Tibial artery (tissue), 4 donors: ENCODE measurements at regions of chrX and their contacts with region 1.

Region 1: DNA sequence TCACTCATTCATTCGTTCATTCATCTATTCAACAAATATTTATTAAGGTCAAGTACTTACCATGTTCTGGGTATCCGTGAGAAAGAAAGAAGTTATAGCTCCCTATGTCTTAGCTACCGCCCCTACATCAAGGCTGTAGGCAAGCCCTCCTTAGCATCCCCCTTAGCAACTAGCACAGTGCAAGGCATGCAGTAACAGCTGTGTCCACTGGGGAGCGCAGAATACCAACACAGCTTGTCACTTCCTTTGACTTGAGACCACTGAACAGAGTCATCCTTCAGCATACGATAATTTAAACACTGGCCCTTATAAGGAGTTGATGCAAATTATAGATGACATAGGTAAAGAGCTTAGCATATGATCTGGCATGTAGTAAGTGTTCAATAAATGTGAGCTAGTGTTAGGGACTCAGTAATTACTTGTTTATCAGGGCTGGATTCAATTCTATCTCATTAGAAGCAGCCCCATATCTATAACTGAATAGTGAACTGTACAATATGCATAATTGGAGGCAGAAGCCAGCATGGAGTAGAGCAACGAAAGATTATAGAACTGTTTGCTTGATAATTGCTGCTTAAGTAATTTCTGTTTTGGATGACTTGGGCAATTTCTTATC is 8.7 kb downstream of the KIAA1210 start:
- DNase-seq: peak; percentile 35 to 62
- H3K4me3 ChIP-seq: no peak overlapping the region
- H3K27ac ChIP-seq: no peak overlapping the region
- H3K4me1 ChIP-seq: no peaks in the 10 kb centered on the region
- H3K27me3 ChIP-seq: no peaks in the 10 kb centered on the region
- CTCF ChIP-seq: peak; percentile 55 to 58

Region 2: DNA sequence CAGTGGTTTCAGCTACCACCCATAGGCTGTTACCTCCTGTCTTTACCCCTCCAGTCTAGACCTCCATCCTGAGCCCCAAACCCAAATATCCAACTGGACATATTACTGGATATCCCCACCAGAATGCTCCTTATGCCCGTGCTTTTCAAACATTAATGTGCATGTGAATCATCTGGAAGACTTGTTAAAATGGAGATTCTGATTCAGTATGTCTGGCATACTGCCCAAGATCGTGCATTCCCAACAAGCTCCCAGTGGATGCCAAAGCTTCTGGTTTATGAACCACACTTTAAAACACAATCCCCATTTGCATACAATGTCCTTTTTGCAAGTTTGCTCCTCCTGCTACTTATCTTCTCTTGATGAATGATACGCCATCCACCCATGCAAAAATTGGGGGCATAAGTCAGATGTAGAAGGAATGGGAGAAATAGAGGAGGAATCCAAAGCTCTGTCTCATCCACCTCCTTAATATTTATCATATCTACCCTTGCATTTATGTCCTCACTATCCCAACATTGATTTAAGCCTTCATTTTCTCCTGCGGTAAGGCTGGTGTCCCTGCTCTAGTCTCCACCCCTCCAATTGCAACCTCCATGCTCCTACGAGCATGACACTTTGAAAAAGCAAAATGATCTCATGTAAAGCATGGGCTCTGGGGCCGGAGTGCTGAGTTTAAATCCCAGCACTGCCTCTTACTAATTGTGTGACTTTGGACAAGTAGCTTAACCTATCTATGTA is 109.8 kb after region 1 on chrX:
- intact Hi-C with region 1: loop called (anchors 10 kb)
- DNase-seq: no peak
- H3K4me3 ChIP-seq: no peak overlapping the region
- H3K27ac ChIP-seq: no peak overlapping the region
- H3K4me1 ChIP-seq: no peaks in the 10 kb centered on the region
- H3K27me3 ChIP-seq: no peaks in the 10 kb centered on the region
- CTCF ChIP-seq: no peak

Region 3: DNA sequence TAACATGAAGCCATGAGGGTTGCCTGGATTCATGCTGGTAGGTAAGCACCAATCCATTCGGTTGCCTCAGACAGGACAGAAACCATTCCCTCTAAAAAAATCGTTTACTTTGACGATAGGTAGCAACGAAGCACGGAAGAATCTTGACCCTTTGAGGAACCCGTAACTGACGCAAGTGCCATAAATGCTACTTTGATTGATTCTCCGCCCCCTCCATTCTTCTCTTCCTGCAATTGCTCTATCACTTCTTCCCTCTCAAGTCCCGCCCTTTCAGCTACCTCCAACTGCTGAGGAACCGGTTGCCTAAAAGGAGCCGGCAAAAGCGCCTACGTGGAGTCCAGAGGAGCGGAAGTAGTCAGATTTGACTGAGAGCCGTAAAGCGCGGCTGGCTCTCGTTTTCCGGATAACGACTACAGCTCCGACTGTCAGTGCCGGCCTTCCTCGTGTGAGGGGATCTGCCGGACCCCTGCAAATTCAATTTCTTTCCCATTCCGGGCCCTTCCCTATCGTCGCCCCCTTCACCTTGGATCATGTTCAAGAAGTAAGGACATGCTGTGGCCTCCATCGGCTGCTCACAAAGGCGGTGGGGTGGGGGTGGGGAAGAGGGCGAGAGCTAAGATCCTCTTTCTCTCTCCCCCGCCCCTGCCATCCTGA is 1484.9 kb after region 1 on chrX and contains the start of gene MCTS1:
- intact Hi-C with region 1: no loop called
- DNase-seq: peak; percentile 79 to 90
- H3K4me3 ChIP-seq: peak within 1 kb of the TSS; percentile 65
- H3K27ac ChIP-seq: peak within 1 kb of the TSS; percentile 82 to 89
- H3K4me1 ChIP-seq: peaks cover 0 to 10% (median 4%) of the 10 kb centered on the region in 4 donors
- H3K27me3 ChIP-seq: no peaks in the 10 kb centered on the region
- CTCF ChIP-seq: no peak